PC-3 (cell line): ENCODE measurements at regions of chr17 and their contacts with region 1.

Region 1: DNA sequence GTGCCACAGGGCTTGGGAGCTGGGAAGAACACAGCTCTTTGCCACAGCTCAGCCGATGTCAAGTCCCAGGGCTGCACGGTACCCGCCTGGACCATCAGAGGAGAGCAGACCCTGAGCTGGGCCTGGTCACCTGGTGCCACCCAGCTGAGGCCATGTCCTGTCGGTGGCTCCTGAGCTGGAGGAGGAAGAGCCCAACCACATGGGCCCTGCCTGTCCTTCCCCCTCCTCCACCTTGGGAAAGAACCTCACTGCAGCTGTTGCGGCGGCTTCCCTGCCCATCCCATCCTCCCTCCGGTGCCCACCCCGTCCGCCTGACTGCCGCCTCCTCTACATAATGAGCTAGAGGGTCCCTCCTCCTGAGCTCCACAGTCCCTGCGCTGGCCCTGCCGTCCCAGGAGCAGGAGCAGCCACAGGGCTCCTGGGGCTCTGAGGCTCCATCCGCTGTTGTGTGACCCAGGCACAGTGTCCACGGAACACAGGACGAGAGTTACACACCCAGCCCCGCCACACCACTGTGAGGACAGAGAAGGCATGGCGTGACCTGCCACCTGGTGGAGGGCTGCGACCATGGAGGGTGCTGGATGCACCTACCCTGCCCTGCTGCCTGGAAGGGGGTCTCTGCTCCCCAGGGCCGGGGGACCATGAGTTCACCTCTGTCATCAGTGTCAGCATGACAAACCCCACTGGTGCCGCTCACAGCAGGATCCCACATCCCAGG is 21.4 kb upstream of the CHMP6 start:
- DNase-seq: peak; percentile 57
- ATAC-seq: peak; percentile 82
- H3K4me3 ChIP-seq: no peak overlapping the region
- H3K27ac ChIP-seq: no peak overlapping the region
- H3K4me1 ChIP-seq: no peaks in the 10 kb centered on the region
- H3K27me3 ChIP-seq: no peaks in the 10 kb centered on the region
- CTCF ChIP-seq: peak; percentile 65

Region 2: GRCh38 chr17:80426681-80427326 is 543.4 kb before region 1 on chr17:
- CTCF ChIA-PET with region 1: no interaction called
- POLR2A ChIA-PET with region 1: no interaction called
- intact Hi-C with region 1: loop called (anchors 5 kb)
- DNase-seq: peak; percentile 82
- ATAC-seq: peak; percentile 86
- H3K4me3 ChIP-seq: no peak overlapping the region
- H3K27ac ChIP-seq: no peak overlapping the region
- H3K4me1 ChIP-seq: no peaks in the 10 kb centered on the region; the same call in 1 of the 2 replicates
- H3K27me3 ChIP-seq: no peaks in the 10 kb centered on the region
- CTCF ChIP-seq: peak; percentile 99